ENCODE measurements at regions of chr12 and their contacts with region 1.

Region 1: DNA sequence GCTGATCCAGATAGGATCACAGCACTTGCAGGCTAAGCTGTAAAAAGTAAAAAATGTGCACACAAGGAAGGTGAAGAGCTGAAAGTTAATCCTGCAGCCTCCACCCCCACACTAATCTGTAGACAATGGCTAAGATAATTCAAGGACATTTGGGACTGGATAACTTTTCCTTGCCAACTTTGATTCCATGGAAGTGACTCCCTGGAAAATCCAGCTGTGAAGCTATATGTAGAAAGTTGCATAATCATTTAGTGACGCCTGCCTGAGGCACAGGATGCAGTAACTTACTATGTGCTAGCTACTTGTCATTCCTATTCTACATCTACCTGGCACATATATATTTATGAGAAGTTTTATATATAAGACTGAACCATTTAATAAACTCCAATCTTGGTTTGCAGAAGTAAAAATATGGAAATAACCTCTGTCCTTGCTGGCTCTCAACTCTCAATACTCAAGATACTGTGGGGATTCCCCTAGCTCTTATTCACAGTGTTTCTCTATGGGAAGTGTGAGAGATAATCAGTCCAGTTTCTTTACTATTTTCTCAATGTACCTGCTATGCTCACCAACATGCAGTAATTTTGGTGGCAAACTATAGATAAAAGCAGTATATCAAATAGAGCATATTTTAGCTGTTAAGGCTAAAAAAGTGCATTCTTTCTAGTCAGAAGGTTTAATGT is 14.8 kb downstream of the LDHB start:
- DNase-seq: no peak
- H3K4me3 ChIP-seq: no peak overlapping the region
- H3K27ac ChIP-seq: no peak overlapping the region
- H3K4me1 ChIP-seq: peaks cover 0 to 4% (median 2%) of the 10 kb centered on the region in 4 experiments; a peak in 1 of 7 replicates
- H3K27me3 ChIP-seq: no peaks in the 10 kb centered on the region
- CTCF ChIP-seq: no peak
- EP300 ChIP-seq: no peak
- POLR2A ChIP-seq: no peak
- RAD21 ChIP-seq: no peak

Region 2: DNA sequence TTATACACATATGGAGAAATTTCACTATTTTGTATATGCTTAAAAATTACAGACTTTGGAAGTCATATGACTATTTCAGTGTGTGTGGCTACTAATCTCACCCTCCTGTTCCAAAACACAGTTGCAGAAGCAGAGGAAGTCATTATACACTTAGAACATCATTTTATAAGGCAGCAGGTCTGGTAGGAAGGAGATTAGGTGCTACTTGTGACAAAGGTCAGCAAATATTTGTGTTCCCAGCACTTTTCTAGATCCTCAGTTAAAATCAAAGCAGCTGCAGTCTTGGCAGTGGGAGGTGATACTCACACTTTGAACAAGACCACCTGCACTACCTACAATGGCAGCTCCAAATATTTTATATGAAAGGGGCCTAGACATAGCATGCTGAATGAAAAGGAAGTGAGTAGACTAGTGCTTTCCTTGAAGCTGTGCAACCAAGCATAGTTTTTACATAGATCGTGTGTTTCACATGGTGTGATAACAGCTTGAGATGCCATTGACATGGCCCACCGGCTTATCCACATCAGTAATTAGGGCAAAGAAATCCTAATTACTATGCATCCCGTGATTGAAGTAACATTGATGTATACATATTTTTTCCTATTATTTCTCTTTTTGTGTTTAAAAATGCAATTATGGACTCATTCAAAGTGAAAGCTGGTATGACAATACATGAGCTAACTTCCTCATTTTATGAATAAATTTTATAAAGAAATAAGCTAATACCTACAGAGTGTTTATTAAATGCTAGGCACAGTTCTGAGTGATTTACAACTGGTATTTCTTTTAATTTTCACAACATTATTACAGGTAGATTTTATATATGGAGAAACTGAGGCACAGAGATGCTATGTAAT is 43.5 kb before region 1 on chr12:
- CTCF ChIA-PET with region 1: no interaction called
- POLR2A ChIA-PET with region 1: no interaction called
- DNase-seq: no peak
- H3K4me3 ChIP-seq: no peak overlapping the region
- H3K27ac ChIP-seq: no peak overlapping the region
- H3K4me1 ChIP-seq: peaks cover 0 to 2% (median under 1%) of the 10 kb centered on the region in 4 experiments; a peak in 2 of 7 replicates
- H3K27me3 ChIP-seq: no peaks in the 10 kb centered on the region
- CTCF ChIP-seq: no peak
- EP300 ChIP-seq: no peak
- POLR2A ChIP-seq: no peak
- RAD21 ChIP-seq: no peak

Region 3: DNA sequence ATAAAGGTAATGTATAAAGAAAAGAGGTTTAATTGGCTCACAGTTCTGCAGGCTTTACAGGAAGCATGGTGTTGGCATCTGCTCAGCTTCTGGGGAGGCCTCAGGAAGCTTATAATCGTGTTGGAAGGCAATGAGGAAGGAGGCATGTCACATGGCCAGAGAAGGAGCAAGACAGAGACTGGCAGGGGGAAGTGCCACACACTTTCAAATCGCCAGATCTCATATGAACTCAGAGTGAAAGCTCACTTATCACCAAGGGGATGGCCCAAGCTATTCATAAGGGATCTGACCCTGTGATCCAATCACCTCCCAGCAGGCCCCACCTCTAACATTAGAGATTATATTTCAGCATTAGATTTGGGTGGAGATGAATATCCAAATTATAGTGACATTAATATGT is 11.5 kb before region 1 on chr12:
- CTCF ChIA-PET with region 1: interaction called, 3 read pairs
- POLR2A ChIA-PET with region 1: interaction called, 123 read pairs
- DNase-seq: no peak
- H3K4me3 ChIP-seq: no peak overlapping the region
- H3K27ac ChIP-seq: no peak overlapping the region
- H3K4me1 ChIP-seq: no peaks in the 10 kb centered on the region
- H3K27me3 ChIP-seq: no peaks in the 10 kb centered on the region
- CTCF ChIP-seq: no peak
- EP300 ChIP-seq: no peak
- POLR2A ChIP-seq: no peak
- RAD21 ChIP-seq: no peak

Measured in H1 (cell line).